H1 (cell line): ENCODE measurements at regions of chr19 and their contacts with region 1.

Region 1: DNA sequence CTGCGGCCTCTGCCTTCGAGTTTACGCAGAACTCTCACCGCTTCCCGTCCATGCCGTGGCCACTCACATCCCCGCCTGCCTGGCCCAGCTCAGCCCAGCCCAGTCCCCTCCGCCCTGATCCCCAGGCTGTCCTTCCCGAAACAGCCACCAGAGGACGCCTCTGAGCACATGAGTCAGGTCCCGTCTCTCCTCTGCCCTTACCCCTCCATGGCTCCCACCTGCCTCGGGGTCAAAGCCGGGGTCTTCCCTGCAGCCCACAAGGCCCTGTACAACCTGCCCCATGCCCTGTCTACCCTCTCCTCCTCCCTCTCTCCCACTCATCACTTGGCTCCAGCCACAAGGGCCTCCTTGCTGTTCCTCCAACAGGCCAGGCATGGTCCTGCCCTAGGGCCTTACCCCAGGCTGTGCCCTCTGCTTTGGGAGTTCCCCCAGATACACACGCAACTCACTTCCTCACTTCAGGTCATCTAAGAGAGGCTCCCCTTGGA is 8.1 kb upstream of the SEMA6B start:
- DNase-seq: peak; percentile 66 to 99
- H3K4me3 ChIP-seq: no peak overlapping the region
- H3K27ac ChIP-seq: no peak overlapping the region
- H3K4me1 ChIP-seq: peaks cover 0 to 2% (median 0%) of the 10 kb centered on the region in 4 experiments; a peak in 1 of 7 replicates
- H3K27me3 ChIP-seq: no peaks in the 10 kb centered on the region
- CTCF ChIP-seq: peak; percentile 91 to 100 (median 99)
- EP300 ChIP-seq: no peak
- POLR2A ChIP-seq: no peak
- RAD21 ChIP-seq: peak; percentile 59 to 69

Region 2: DNA sequence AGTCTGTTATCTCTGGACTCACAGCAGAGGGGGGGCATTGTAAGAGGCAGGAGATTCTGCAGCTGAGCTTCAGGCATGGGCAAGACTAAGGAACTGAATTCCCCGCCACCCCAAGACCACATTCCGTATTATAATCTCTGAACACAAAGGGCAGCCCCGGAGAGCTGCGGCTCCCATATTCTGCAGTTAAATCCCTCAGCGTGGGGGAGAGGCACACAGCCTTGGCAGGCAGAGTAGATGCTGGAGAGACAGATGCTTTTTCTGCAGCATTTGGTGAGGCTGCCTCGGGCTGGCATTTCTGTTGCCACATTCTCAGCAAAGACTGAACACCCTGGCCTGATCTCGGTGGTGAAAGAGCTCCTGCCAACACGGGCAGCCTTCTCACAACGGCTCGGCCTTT is 152.3 kb before region 1 on chr19:
- CTCF ChIA-PET with region 1: no interaction called
- POLR2A ChIA-PET with region 1: no interaction called
- DNase-seq: no peak
- H3K4me3 ChIP-seq: peak overlapping the region in 2 of 4 experiments; percentile 15 to 35; a peak in 4 of 8 replicates
- H3K27ac ChIP-seq: peak overlapping the region; percentile 68; the same call in 1 of the 2 replicates
- H3K4me1 ChIP-seq: peaks cover 6 to 22% (median 7%) of the 10 kb centered on the region in 4 experiments; a peak in 6 of 7 replicates
- H3K27me3 ChIP-seq: no peaks in the 10 kb centered on the region
- CTCF ChIP-seq: no peak
- EP300 ChIP-seq: no peak
- POLR2A ChIP-seq: no peak; a peak in 1 of 3 replicates
- RAD21 ChIP-seq: no peak

Region 3: DNA sequence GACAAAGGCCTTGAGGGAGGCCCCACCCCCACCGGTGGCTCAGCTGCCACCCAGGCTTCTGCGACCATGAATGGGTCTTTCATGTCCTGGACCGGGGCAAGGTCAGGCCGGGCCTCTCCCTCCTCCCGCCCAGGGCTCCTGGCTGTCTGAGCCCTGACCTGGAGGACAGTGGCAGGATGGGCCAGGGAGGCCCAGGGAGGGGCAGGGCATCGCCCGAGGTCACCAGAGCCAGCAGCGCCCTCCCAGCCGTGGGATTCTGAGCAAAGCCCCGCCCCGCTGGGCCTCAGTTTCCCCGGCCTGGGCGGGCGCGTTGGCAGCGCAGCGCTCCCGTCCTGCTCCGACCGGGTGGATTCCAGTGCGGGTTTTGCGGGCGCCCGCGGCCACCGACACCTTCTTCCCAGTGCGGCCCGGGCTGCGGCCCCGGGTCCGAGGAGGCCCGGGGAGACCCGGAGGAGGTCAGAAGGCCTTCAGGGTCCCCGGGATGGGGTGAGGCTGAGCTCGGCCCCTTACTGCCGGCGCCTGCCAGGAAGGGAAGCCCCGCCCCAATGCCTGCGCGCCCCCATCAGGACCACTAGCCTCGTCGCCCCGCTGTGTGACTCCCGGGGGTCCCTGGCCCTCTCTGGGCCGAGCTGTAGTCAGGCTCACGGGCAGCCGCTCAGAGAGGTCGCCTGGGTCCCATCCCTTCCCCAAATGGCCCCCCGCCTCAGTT is 16.5 kb after region 1 on chr19:
- CTCF ChIA-PET with region 1: interaction called, 83 read pairs
- POLR2A ChIA-PET with region 1: interaction called, 19 read pairs
- DNase-seq: peak in 1 of 2 experiments; percentile 95
- H3K4me3 ChIP-seq: peak overlapping the region; percentile 38 to 77 (median 67)
- H3K27ac ChIP-seq: no peak overlapping the region
- H3K4me1 ChIP-seq: peaks cover 0 to 8% (median 5%) of the 10 kb centered on the region in 4 experiments; a peak in 6 of 7 replicates
- H3K27me3 ChIP-seq: peaks cover 0 to 12% (median 8%) of the 10 kb centered on the region in 4 experiments; a peak in 4 of 7 replicates
- CTCF ChIP-seq: no peak
- EP300 ChIP-seq: no peak
- POLR2A ChIP-seq: 0 out of 3 replicates have a peak, but pooled peaks of 1 of the 2 experiments have one; percentile 11
- RAD21 ChIP-seq: no peak

Region 4: DNA sequence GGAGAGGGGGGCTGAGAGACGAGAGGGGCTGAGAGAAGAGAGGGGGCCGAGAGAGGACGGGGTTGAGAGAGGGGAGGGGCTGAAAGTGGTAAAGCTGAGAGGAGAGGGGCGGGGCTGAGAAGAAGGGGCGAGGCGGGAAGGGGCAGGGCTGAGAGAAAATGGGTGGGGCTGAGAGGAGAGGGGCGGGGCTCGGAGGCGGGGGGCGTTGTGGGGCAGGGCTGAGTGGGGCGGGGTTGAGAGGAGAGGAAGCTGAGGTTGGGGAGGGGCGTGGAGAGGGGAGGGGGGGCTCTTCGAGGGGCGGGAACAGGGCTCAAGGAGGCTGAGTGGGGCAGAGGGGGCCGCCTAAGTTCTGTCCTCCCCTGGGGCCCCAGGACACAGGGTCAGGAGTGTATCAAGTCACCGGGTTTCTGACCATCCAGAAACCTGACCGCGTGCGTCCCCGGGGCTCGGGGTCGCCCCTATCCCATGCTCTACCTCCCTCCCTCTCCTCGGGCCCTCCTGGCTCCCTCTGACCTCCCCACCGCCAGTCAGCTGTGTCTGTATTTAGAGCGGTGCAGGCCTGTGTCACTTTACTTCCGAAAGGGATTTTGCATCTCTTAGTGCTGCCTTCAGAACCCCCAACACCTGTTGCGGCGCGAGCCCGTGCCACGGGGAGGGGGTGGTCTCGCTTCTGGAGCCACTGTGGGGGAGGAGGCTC is 30.5 kb after region 1 on chr19:
- CTCF ChIA-PET with region 1: interaction called, 34 read pairs
- POLR2A ChIA-PET with region 1: no interaction called
- DNase-seq: peak in 1 of 2 experiments; percentile 91
- H3K4me3 ChIP-seq: peak overlapping the region; percentile 52 to 70 (median 54)
- H3K27ac ChIP-seq: no peak overlapping the region
- H3K4me1 ChIP-seq: peaks cover 0 to 9% (median 4%) of the 10 kb centered on the region in 4 experiments; a peak in 5 of 7 replicates
- H3K27me3 ChIP-seq: peaks cover 3 to 9% (median 8%) of the 10 kb centered on the region in 4 experiments; a peak in 6 of 7 replicates
- CTCF ChIP-seq: 0 out of 4 replicates have a peak, but pooled peaks of 1 of the 3 experiments have one; percentile 0
- EP300 ChIP-seq: no peak
- POLR2A ChIP-seq: no peak
- RAD21 ChIP-seq: no peak

Region 5: DNA sequence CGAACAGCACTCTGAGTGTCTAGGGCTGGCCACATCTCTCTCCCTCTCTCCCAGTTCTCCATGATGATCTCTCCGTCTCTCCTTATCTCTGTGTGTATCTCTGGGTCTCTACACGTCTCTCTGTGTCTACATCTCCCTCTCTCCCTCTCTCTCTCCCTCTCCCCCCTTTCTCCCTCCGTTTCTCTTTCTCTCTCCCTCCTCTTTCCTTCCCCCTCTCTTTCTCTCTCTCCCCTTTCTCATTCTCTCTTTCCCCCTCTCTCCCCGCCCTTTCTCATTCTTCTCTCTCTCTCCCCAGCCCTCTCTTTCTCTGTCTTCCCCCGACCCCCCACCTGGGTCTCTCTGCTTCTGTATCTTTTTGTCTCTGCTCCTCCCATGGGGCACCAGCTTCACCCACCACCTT is 50.4 kb after region 1 on chr19:
- CTCF ChIA-PET with region 1: interaction called, 316 read pairs
- POLR2A ChIA-PET with region 1: no interaction called
- DNase-seq: no peak
- H3K4me3 ChIP-seq: no peak overlapping the region
- H3K27ac ChIP-seq: no peak overlapping the region
- H3K4me1 ChIP-seq: peaks cover 0 to 3% (median 0%) of the 10 kb centered on the region in 4 experiments; a peak in 4 of 7 replicates
- H3K27me3 ChIP-seq: peaks cover 0 to 2% (median 0%) of the 10 kb centered on the region in 4 experiments; a peak in 2 of 7 replicates
- CTCF ChIP-seq: no peak
- EP300 ChIP-seq: no peak
- POLR2A ChIP-seq: no peak
- RAD21 ChIP-seq: no peak

Region 6: DNA sequence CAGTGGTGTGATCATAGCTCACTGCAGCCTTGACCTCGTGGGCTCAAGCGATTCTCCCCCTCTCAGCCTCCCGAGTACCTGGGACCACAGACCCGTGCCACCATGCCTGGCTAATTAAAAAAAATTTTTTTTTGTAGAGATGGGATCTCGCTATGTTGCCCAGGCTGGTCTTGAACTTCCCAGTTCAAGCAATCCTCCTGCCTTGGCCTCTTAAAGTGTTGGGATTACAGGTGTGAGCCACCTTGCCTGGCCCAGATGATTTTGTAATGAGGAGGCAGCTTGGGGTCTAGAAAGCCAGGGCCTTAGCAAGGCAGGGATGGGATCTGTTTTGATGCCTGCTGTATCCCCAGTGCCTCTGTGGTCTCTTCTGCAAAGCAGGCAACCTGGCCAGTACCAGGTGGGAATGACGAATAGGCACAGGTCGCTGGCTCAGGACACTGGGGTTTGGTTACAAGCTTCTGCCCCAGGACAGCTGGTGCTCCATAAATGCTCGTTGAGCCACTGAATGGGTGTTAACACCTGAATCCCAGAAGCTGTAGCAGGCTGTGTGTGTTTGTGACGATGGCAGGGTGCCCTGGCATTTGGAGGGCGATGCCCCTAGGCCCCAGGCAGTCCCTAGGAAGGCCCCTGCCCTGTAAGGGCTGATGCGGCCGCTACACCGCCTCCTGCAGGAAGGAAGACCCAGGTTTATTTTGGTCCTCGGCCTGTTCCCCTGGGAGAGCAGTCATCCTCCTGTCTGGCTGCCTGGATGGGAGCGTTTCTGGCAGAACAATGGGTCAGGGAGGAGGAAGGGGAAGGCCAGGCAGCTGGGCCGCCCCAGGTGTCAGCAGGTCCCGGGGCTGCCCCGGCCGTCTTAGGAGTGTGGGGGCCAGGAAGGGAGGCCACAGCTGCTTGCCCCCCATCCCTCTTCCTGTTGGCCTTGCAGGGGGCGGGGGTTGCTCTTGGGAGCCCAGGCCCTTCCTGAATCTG is 80.3 kb after region 1 on chr19:
- CTCF ChIA-PET with region 1: interaction called, 11 read pairs
- POLR2A ChIA-PET with region 1: no interaction called
- DNase-seq: peak in 1 of 2 experiments; percentile 69
- H3K4me3 ChIP-seq: no peak overlapping the region
- H3K27ac ChIP-seq: no peak overlapping the region
- H3K4me1 ChIP-seq: no peaks in the 10 kb centered on the region; a peak in 1 of 7 replicates
- H3K27me3 ChIP-seq: no peaks in the 10 kb centered on the region
- CTCF ChIP-seq: peak; percentile 50 to 63 (median 59)
- EP300 ChIP-seq: no peak
- POLR2A ChIP-seq: no peak
- RAD21 ChIP-seq: peak in 1 of 2 experiments; percentile 33; a peak in 2 of 4 replicates

Region 7: DNA sequence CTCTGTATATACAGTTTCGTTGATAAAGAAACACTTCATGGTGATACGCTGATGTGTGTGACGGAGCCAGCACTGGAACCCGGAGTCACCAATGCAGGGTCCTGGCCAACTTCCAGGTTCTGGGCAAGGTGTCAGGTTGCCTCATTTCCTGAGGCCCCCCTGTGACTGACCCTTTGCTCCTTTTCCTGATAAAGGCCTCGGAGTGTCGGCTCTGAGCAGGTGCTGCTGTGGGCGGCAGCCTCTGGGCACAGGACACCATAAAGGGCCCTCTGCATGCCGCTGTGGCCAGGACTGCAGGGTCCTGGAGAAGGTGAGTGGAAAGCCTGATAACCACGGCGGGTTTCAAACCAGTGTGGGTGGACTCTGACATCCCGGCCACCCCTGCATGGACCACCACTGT is 119.8 kb after region 1 on chr19:
- CTCF ChIA-PET with region 1: no interaction called
- POLR2A ChIA-PET with region 1: no interaction called
- DNase-seq: no peak
- H3K4me3 ChIP-seq: no peak overlapping the region
- H3K27ac ChIP-seq: no peak overlapping the region
- H3K4me1 ChIP-seq: no peaks in the 10 kb centered on the region
- H3K27me3 ChIP-seq: no peaks in the 10 kb centered on the region
- CTCF ChIP-seq: no peak
- EP300 ChIP-seq: no peak
- POLR2A ChIP-seq: no peak
- RAD21 ChIP-seq: no peak